Activated CD4-positive, alpha-beta memory T cell treated with anti-CD3 and anti-CD28 coated beads for 36 hours (primary cell): ENCODE measurements at regions of chr7 and their contacts with region 1.

Region 1: DNA sequence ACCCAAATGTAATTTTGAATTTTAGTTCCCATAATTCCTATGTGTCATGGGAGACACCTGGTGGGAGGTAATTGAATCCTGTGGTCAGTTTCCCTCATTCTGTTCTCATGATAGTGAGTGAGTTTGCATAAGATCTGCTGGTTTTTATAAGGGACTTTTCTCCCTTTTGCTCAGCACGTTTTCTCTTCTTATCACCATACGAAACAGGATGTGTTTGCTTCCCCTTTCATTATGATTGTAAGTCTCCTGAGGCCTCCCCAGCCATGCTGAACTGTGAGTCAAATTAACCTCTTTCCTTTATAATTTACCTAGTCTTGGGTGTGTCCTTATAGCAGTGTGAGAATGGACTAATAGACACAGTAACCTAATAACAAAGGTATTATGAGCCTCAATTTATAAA is 36.1 kb upstream of the ZNF736 start:
- DNase-seq: no peak
- H3K4me3 Mint-ChIP-seq: no peak overlapping the region
- H3K27ac Mint-ChIP-seq: no peak overlapping the region
- H3K4me1 Mint-ChIP-seq: no peaks in the 10 kb centered on the region
- H3K27me3 Mint-ChIP-seq: no peaks in the 10 kb centered on the region

Region 2: GRCh38 chr7:64223366-64223765 is 54.3 kb before region 1 on chr7:
- CTCF ChIA-PET with region 1: no interaction called
- POLR2A ChIA-PET with region 1: no interaction called
- intact Hi-C with region 1: loop called (anchors 10 kb)
- DNase-seq: no peak
- H3K4me3 Mint-ChIP-seq: no peak overlapping the region
- H3K27ac Mint-ChIP-seq: no peak overlapping the region
- H3K4me1 Mint-ChIP-seq: no peaks in the 10 kb centered on the region
- H3K27me3 Mint-ChIP-seq: no peaks in the 10 kb centered on the region

Region 3: DNA sequence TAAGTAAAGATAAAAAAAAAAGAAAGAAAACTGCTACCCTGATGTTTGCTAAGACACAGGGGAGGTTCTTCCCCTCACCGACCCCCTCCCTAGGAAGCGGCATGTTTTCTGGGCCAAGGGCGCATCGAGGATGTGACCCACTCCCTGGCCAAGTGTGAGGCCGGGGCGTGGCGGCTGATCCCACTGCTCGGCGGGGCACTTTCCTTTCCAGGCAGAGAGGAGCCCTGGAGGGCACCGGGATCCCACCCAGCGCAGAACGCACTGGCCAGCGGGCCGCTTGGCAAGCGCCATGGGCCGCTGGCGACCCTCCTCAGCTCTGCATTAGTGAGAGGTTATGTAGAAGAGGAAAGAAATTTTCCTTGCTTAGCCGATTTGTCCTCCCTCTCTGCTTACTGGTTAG is 129.5 kb after region 1 on chr7:
- CTCF ChIA-PET with region 1: no interaction called
- POLR2A ChIA-PET with region 1: no interaction called
- intact Hi-C with region 1: no loop called
- DNase-seq: no peak
- H3K4me3 Mint-ChIP-seq: no peak overlapping the region
- H3K27ac Mint-ChIP-seq: no peak overlapping the region
- H3K4me1 Mint-ChIP-seq: no peaks in the 10 kb centered on the region
- H3K27me3 Mint-ChIP-seq: no peaks in the 10 kb centered on the region